Activated CD4-positive, alpha-beta memory T cell treated with anti-CD3 and anti-CD28 coated beads, Interleukin-2, amount 10 ng/mL, durations not matched to agents 7 days and 5 days (primary cell): ENCODE measurements at regions of chr1 and their contacts with region 1.

Region 1: DNA sequence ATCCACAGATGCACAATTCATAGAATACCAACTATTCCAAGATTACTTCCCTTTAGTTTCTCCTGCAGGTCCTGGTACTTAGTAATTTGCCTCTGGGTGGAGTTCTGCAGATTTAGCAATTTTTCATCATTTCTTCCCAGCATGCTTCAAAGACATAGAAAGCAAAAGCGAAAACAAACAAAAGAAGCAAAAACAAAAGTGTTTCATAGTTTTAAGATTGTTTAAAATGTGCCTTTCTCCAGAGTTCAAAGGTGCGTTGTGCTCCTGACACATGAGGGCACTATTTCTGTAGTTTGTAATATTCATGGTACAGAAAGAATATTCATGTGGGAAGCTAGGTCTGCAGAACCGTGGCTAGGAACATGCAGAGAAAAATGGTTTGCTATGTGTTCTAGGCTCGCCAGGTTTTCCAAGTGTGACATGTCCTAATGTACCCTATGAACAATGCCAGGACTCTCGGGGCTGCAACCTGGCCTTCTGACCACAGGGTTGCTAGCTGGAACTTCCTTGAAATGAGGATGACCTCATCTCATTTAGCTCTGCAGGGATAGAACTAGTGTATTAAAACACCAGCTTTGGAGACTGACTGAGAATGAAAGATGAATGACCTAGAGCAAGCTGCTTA is 30.0 kb upstream of the RCSD1 start:
- DNase-seq: peak; percentile 51
- H3K4me3 Mint-ChIP-seq: peak overlapping the region; percentile 40
- H3K27ac Mint-ChIP-seq: peak overlapping the region; percentile 36
- H3K4me1 Mint-ChIP-seq: peaks cover 42% of the 10 kb centered on the region
- H3K27me3 Mint-ChIP-seq: no peaks in the 10 kb centered on the region

Region 2: DNA sequence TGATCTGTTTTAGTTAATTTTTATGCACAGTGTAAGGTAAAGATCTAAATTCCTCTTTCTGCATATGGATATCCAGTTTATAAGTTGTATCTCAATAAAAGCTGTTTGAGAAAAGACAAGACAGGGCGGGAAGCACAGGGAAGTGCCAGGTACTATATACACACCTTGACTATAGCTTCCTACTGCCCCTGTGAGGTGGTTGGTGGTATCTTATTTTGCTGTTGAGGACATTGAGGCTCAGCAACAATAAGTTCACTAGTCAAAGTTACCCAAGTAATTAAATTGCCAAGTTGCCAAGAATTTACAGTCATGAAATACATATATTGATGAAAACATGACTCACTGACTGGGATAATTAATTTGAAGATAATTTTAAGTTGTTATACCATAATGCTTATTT is 190.9 kb before region 1 on chr1:
- CTCF ChIA-PET with region 1: no interaction called
- POLR2A ChIA-PET with region 1: no interaction called
- DNase-seq: no peak
- H3K4me3 Mint-ChIP-seq: no peak overlapping the region
- H3K27ac Mint-ChIP-seq: no peak overlapping the region
- H3K4me1 Mint-ChIP-seq: peaks cover 21% of the 10 kb centered on the region
- H3K27me3 Mint-ChIP-seq: no peaks in the 10 kb centered on the region

Region 3: DNA sequence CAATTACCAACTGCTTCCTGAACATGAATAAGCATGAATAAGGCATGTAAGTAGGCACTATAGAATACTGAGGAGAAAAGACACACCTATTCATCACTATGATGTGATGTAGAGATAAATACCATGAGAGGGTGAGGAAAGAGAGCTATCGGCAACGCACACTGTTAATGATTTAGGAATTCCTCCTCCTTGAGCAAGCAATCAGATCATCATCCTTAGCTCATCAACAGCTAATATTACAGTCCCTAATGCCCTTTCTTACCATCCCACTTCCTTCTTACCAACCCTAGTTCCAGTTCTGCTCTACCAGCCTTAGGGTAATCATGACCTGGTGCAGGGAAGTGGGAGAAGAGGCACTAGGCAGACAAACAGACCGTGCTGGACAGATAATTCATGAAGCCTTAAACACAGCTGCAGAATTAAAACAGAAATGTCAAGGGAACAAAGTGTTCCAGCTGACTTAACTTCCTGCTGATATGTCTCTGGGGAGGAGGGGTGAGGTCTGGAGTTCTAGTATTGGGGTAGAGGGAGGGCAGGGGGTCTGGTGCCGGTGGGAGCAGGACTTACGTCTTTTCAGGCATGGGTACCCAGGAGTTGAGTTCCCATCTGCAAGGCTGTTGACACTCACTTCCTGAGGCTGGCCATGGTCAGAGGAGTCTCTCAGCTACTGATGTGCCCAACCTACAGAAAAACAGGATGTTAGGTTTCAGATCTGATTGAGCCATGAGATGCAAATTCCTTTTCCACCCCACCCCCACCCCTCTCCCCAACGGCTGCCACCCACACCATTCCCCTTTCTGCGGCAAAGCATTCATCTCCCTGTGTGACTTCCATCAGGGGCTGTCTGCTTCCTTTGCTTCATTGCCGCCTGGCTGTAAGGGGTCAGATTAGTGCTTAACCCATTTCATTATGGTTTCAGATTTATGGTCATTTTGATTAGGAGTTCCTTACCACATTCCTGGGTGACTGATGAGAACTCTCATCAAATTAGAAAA is 17.4 kb after region 1 on chr1:
- CTCF ChIA-PET with region 1: interaction called, 31 read pairs
- POLR2A ChIA-PET with region 1: interaction called, 18 read pairs
- DNase-seq: peak; percentile 48
- H3K4me3 Mint-ChIP-seq: peak overlapping the region; percentile 73
- H3K27ac Mint-ChIP-seq: peak overlapping the region; percentile 93
- H3K4me1 Mint-ChIP-seq: peaks cover 61% of the 10 kb centered on the region
- H3K27me3 Mint-ChIP-seq: no peaks in the 10 kb centered on the region

Region 4: DNA sequence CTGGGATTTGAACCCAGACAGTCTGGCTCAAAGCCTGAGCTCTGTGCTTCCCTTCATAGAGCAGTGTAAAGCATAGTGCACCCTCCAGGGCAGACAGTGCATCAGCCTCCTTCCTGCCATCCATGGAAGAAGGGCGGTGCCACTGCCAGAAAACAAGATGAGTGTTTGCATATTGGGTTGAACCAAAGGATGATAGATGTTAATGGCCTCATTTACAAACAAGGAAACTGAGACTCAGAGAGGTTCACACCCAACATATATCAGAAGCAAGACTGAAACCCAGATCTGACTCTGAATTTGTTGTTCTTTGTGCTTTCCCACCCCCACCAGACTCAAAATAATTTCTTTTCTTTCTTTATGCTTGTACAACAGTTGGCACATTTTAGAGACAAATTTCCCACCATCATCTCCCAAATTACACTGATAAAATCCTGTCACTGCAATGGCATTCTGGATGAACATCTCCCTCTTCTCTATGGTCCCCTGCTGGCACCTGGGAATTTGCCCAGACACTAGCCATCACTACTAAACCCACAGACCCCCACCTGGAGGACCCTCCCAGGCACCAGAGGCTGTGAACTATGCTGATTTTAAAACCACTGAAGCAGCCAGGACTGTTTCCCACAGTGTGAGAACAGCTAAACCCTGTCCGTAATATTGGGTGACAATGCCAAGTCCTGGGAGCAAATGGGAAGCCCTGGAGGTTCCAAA is 76.3 kb after region 1 on chr1:
- CTCF ChIA-PET with region 1: interaction called, 19 read pairs
- POLR2A ChIA-PET with region 1: interaction called, 7 read pairs
- DNase-seq: no peak
- H3K4me3 Mint-ChIP-seq: no peak overlapping the region
- H3K27ac Mint-ChIP-seq: no peak overlapping the region
- H3K4me1 Mint-ChIP-seq: peaks cover 46% of the 10 kb centered on the region
- H3K27me3 Mint-ChIP-seq: no peaks in the 10 kb centered on the region

Region 5: GRCh38 chr1:167687919-167688519 is 88.0 kb after region 1 on chr1:
- CTCF ChIA-PET with region 1: interaction called, 166 read pairs
- POLR2A ChIA-PET with region 1: interaction called, 28 read pairs
- DNase-seq: peak; percentile 79
- H3K4me3 Mint-ChIP-seq: no peak overlapping the region
- H3K27ac Mint-ChIP-seq: peak overlapping the region; percentile 30
- H3K4me1 Mint-ChIP-seq: peaks cover 13% of the 10 kb centered on the region
- H3K27me3 Mint-ChIP-seq: no peaks in the 10 kb centered on the region

Region 6: DNA sequence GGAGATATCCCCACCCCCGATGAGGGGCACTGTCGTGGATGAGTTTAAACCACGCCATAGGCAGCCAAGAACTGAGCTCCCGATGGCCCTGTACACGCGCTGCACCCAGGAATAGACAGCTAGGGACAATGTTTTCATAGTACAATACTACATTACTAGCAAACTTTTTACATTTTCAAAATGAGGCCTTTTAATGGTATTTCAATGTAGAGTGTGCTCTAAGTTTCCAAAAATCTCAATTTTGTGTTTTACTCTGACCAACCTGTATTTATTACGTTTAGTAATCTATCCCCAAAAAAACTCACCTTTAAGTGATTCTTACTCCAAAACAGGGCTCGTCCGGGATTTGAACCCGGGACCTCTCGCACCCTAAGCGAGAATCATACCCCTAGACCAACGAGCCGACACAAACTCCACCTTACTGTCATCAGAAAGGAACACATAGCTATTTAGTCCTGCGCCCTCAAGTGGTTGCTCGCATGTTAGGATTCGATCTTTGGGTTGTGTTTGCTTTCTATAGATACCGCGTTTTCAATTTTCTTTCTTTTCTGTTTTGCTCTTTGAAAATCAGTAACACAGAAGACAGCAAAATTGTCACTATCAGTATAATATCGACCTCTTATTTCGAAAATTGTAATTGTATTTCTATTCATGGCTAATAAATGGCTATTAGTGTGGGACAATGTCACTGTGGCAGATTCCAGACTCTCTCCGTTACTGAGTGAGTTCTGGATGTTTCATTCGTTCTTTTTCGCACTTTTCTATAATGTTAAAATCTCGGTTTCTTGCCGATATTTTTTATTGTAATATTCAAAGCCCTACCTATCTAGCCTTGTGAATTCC is 115.3 kb after region 1 on chr1:
- CTCF ChIA-PET with region 1: interaction called, 12 read pairs
- POLR2A ChIA-PET with region 1: interaction called, 18 read pairs
- DNase-seq: peak; percentile 92
- H3K4me3 Mint-ChIP-seq: peak overlapping the region; percentile 84
- H3K27ac Mint-ChIP-seq: peak overlapping the region; percentile 92
- H3K4me1 Mint-ChIP-seq: peaks cover 46% of the 10 kb centered on the region
- H3K27me3 Mint-ChIP-seq: peaks cover 7% of the 10 kb centered on the region